Activated naive CD8-positive, alpha-beta T cell treated with anti-CD3 and anti-CD28 coated beads, Interleukin-2, amount 10 ng/mL, durations not matched to agents 7 days and 5 days (primary cell): ENCODE measurements at regions of chr14 and their contacts with region 1.

Region 1: GRCh38 chr14:61326847-61327246 is 5.5 kb downstream of the PRKCH start:
- DNase-seq: no peak
- ATAC-seq: no peak
- H3K4me3 Mint-ChIP-seq: peak overlapping the region; percentile 99
- H3K27ac Mint-ChIP-seq: peak overlapping the region; percentile 83
- H3K4me1 Mint-ChIP-seq: peaks cover 42% of the 10 kb centered on the region
- H3K27me3 Mint-ChIP-seq: no peaks in the 10 kb centered on the region

Region 2: DNA sequence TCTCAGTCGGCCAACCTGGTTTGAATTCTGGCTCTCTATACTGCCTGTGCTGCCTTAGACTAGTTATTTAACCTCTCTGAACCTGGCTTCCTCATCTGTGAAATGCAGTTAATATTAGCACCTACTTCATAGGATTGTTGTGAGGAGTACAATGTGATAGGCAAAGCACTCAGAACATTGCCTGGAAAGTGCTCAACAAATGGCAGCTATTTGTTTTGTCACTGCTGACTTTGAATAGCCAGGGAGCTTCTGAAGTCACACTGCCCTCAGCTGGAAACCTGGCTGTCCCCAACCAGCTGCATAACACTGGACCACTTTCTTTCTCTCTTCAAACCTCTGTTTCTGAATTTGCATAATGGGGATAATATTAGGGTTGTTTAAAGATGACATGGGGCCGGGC is 55.3 kb before region 1 on chr14:
- POLR2A ChIA-PET with region 1: interaction called, 11 read pairs
- DNase-seq: no peak
- ATAC-seq: no peak
- H3K4me3 Mint-ChIP-seq: no peak overlapping the region
- H3K27ac Mint-ChIP-seq: no peak overlapping the region
- H3K4me1 Mint-ChIP-seq: peaks cover 7% of the 10 kb centered on the region
- H3K27me3 Mint-ChIP-seq: peaks cover 46% of the 10 kb centered on the region

Region 3: GRCh38 chr14:61388173-61388975 is 61.5 kb after region 1 on chr14:
- POLR2A ChIA-PET with region 1: interaction called, 29 read pairs
- DNase-seq: peak; percentile 53
- ATAC-seq: peak; percentile 60
- H3K4me3 Mint-ChIP-seq: no peak overlapping the region
- H3K27ac Mint-ChIP-seq: no peak overlapping the region
- H3K4me1 Mint-ChIP-seq: peaks cover 40% of the 10 kb centered on the region
- H3K27me3 Mint-ChIP-seq: no peaks in the 10 kb centered on the region